ENCODE measurements at regions of chr7 and their contacts with region 1.

Region 1: GRCh38 chr7:105808703-105809590 is 67.5 kb downstream of the ATXN7L1 start:
- DNase-seq: peak; percentile 96
- H3K4me3 Mint-ChIP-seq: no peak overlapping the region
- H3K27ac Mint-ChIP-seq: peak overlapping the region; percentile 38
- H3K4me1 Mint-ChIP-seq: peaks cover 58% of the 10 kb centered on the region
- H3K27me3 Mint-ChIP-seq: peaks cover 3% of the 10 kb centered on the region

Region 2: GRCh38 chr7:105289704-105290103 is 519.2 kb before region 1 on chr7:
- CTCF ChIA-PET with region 1: no interaction called
- intact Hi-C with region 1: loop called (anchors 1 kb)
- DNase-seq: peak; percentile 40
- H3K4me3 Mint-ChIP-seq: no peak overlapping the region
- H3K27ac Mint-ChIP-seq: peak overlapping the region; percentile 14
- H3K4me1 Mint-ChIP-seq: peaks cover 21% of the 10 kb centered on the region
- H3K27me3 Mint-ChIP-seq: no peaks in the 10 kb centered on the region

Region 3: GRCh38 chr7:105399043-105399725 is 409.8 kb before region 1 on chr7:
- CTCF ChIA-PET with region 1: no interaction called
- intact Hi-C with region 1: no loop called
- DNase-seq: no peak
- H3K4me3 Mint-ChIP-seq: no peak overlapping the region
- H3K27ac Mint-ChIP-seq: no peak overlapping the region
- H3K4me1 Mint-ChIP-seq: peaks cover 5% of the 10 kb centered on the region
- H3K27me3 Mint-ChIP-seq: no peaks in the 10 kb centered on the region

Region 4: GRCh38 chr7:105623378-105623777 is 185.6 kb before region 1 on chr7:
- CTCF ChIA-PET with region 1: no interaction called
- intact Hi-C with region 1: no loop called
- DNase-seq: no peak
- H3K4me3 Mint-ChIP-seq: no peak overlapping the region
- H3K27ac Mint-ChIP-seq: no peak overlapping the region
- H3K4me1 Mint-ChIP-seq: no peaks in the 10 kb centered on the region
- H3K27me3 Mint-ChIP-seq: no peaks in the 10 kb centered on the region

Region 5: DNA sequence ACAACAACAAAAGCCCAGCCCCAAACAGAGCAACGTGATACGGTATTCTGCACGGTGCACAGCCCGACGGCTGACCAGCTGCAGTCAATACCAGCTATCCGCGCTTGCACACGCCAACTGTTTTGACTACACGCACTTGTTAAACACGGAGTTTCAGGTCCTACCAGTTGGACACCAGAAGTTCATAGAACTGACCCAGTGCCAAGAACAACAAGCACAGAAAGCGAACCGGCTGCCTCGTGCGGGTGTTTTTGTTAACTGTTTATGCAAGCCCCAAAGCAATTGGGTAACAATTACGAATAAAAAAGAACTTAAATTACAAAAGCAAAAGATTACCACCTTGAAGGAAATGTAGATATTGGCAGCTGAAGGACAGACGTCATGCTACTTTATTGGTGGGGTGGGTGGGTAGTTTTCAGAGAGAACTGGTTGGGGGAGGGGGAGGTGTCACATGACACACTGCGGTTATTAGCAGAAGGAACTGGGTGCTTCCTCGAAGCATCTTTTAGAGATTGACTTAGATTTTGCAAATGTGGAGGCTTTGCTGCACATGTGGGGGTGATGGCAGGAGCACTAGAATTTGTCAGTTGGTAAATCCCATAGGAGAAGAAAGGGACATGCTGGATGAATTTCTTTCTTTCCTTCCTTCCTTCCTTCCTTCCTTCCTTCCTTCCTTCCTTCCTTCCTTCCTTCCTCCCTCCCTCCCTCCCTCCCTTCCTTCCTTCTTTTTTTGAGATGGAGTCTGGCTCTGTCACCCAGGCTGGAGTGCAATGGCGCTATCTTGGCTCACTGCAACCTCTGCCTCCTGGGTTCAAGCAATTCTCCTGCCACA is 117.0 kb before region 1 on chr7:
- CTCF ChIA-PET with region 1: no interaction called
- intact Hi-C with region 1: loop called (anchors 1 kb)
- DNase-seq: peak; percentile 80
- H3K4me3 Mint-ChIP-seq: peak overlapping the region; percentile 77
- H3K27ac Mint-ChIP-seq: peak overlapping the region; percentile 79
- H3K4me1 Mint-ChIP-seq: peaks cover 36% of the 10 kb centered on the region
- H3K27me3 Mint-ChIP-seq: no peaks in the 10 kb centered on the region

Region 6: GRCh38 chr7:105830391-105831301 is 21.7 kb after region 1 on chr7:
- CTCF ChIA-PET with region 1: no interaction called
- intact Hi-C with region 1: no loop called
- DNase-seq: no peak
- H3K4me3 Mint-ChIP-seq: no peak overlapping the region
- H3K27ac Mint-ChIP-seq: no peak overlapping the region
- H3K4me1 Mint-ChIP-seq: peaks cover 8% of the 10 kb centered on the region
- H3K27me3 Mint-ChIP-seq: no peaks in the 10 kb centered on the region

Region 7: GRCh38 chr7:105890290-105890997 is 81.5 kb after region 1 on chr7:
- CTCF ChIA-PET with region 1: interaction called, 3 read pairs
- intact Hi-C with region 1: loop called (anchors 1 kb)
- DNase-seq: peak; percentile 72
- H3K4me3 Mint-ChIP-seq: no peak overlapping the region
- H3K27ac Mint-ChIP-seq: no peak overlapping the region
- H3K4me1 Mint-ChIP-seq: peaks cover 29% of the 10 kb centered on the region
- H3K27me3 Mint-ChIP-seq: no peaks in the 10 kb centered on the region

Region 8: DNA sequence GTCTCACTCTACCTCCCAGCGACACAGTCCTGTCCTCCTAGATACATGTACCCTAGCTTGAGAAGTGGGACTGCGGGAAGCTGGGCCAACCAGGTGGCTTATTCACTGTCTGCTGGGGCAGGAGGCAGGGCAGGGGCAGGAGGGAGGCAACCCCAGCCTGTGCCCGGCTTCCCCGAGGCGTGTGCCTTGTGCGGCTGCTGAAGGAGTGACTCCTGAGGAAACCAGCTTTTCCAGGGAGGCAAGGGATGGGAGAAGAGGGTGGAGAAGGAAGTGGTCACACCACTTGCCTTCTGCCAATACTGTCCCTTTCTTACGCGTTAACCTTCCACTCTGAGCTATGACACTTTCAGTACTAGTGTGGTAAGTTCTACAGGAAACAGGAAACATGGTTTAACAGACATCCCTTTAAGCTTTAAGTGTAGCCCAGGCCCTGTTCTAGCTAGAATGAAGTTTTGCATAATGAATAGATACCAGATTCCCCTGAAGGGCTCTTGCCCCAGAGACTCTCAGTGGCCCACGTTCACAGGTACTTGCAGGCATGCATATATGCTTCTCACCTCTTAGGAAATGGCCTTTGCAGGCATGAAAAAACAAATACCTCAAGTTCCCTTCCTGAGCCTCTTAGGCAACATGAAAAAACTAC is 262.5 kb after region 1 on chr7:
- CTCF ChIA-PET with region 1: no interaction called
- intact Hi-C with region 1: loop called (anchors 1 kb)
- DNase-seq: peak; percentile 78
- H3K4me3 Mint-ChIP-seq: peak overlapping the region; percentile 65
- H3K27ac Mint-ChIP-seq: peak overlapping the region; percentile 91
- H3K4me1 Mint-ChIP-seq: peaks cover 34% of the 10 kb centered on the region
- H3K27me3 Mint-ChIP-seq: no peaks in the 10 kb centered on the region

Region 9: GRCh38 chr7:106425017-106425719 is 616.2 kb after region 1 on chr7:
- CTCF ChIA-PET with region 1: no interaction called
- intact Hi-C with region 1: loop called (anchors 5 kb)
- DNase-seq: peak; percentile 96
- H3K4me3 Mint-ChIP-seq: peak overlapping the region; percentile 80
- H3K27ac Mint-ChIP-seq: peak overlapping the region; percentile 99
- H3K4me1 Mint-ChIP-seq: peaks cover 86% of the 10 kb centered on the region
- H3K27me3 Mint-ChIP-seq: peaks cover 3% of the 10 kb centered on the region

Measured in activated naive CD4-positive, alpha-beta T cell treated with anti-CD3 and anti-CD28 coated beads for 36 hours (primary cell).